Activated CD4-positive, alpha-beta memory T cell treated with anti-CD3 and anti-CD28 coated beads, Interleukin-2, amount 10 ng/mL, durations not matched to agents 7 days and 5 days (primary cell): ENCODE measurements at regions of chr9 and their contacts with region 1.

Region 1: DNA sequence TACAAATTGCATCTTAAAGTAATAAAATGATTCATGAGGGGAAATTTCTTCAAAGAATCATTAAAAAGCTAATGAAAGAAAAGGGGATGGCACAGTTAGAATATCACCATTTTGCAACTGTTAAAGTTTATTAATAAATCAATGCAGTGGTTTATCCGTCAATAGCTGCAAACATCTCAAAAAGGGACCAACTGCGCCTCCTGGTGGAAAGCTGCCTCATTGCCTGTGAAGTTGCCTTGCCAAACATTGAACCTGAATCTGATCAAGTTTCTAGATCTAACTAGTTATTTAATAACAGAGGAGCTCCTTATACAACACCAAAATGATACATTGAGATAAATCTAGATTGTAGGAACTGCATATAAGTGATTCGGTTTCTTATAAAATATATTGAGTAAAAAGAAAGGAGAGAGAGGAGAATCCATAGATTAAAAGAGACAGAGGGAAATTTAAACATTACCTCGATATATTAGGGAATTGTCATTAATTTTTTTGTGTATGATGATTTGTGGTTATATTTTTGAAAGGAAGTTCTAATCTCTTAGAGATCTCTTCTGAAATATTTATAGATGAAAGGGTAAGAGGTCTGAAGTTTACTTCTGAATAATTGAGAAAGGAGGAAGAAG is 6.9 kb upstream of the NDUFB6 start:
- DNase-seq: peak; percentile 80
- H3K4me3 Mint-ChIP-seq: no peak overlapping the region
- H3K27ac Mint-ChIP-seq: no peak overlapping the region
- H3K4me1 Mint-ChIP-seq: peaks cover 5% of the 10 kb centered on the region
- H3K27me3 Mint-ChIP-seq: peaks cover 17% of the 10 kb centered on the region

Region 2: DNA sequence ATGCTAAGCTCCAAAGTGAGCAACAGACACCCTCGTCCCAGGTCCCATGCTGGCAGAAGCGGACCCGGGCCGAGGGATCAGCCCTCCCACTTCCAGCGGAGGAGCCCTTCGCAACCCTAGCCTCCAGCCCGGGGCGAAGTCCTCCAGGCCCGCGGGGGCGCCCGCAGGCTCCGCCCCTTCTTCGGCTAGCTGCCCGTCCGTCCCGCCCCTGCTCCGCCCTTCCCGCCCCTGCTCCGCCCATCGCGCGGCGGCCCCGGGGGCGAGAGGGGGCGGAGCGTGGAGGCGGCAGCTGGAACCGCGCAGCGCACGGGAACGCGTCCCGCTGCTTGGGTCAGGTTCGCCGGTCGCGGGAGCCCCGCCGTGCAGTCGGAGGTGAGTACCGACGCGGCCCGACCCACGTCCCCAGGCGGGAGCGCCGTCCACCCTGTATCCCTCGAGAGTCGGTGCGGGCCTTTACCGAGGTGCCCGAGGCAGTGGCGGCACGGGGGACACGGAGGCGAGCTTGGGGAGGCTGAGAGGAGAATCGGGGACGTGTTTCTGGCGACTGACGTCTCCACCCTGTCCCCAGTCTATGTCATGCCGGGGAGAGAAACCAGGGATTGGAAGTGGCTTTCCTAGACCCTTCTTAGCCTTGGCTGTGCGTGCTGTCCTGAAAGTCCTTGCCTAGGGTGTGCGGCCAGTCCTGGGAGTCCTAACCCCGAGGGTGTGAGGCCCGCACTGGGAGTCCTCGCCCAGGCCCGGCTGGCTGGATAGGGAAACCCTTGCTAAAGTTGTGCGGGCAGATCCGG is 195.3 kb before region 1 on chr9 and contains the start of gene ACO1:
- CTCF ChIA-PET with region 1: interaction called, 416 read pairs
- POLR2A ChIA-PET with region 1: interaction called, 20 read pairs
- DNase-seq: peak; percentile 87
- H3K4me3 Mint-ChIP-seq: peak within 1 kb of the TSS; percentile 75
- H3K27ac Mint-ChIP-seq: no peak within 1 kb of the TSS
- H3K4me1 Mint-ChIP-seq: peaks cover 8% of the 10 kb centered on the region
- H3K27me3 Mint-ChIP-seq: peaks cover 35% of the 10 kb centered on the region
- total RNA-seq, gene ACO1: 6.4 to 6.6 TPM

Region 3: DNA sequence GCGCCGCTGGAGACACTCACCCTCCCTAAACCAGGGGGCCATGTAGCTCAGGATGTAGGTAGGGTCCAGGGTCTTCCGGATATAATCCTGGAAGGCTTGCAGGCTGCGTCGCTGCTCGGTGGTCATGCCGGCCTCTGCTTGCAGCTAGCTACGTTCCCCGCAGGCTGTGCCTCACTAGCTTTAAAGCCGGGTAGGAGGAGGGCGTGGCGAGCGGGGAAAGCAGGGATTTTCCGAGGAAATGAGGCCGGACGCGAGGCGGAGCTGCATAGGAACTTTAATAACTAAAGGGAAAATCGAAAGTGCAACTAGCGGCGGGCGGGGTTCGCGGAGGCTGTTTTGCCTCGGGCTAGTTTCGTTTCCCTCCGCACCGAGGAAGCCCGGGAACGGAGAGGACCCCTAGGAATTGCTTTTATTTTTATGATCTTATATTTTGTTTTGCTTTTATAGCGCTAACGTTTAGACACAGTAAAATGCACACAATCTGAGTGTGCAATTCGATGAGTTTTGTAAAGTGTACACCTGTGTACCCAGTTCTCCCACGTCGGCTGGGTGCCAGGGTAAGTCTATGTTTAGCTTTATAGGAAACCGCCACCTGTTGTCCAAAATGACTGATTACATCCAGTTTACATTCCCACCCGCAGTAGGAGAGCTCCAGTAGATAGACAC is 53.6 kb before region 1 on chr9 and contains the start of gene RIGI:
- CTCF ChIA-PET with region 1: interaction called, 14 read pairs
- POLR2A ChIA-PET with region 1: interaction called, 5 read pairs
- DNase-seq: peak; percentile 83
- H3K4me3 Mint-ChIP-seq: peak within 1 kb of the TSS; percentile 96
- H3K27ac Mint-ChIP-seq: peak within 1 kb of the TSS; percentile 88
- H3K4me1 Mint-ChIP-seq: peaks cover 60% of the 10 kb centered on the region
- H3K27me3 Mint-ChIP-seq: no peaks in the 10 kb centered on the region
- total RNA-seq, gene RIGI: 32.4 to 33.7 TPM

Region 4: GRCh38 chr9:32550562-32551433 is 29.0 kb before region 1 on chr9:
- CTCF ChIA-PET with region 1: interaction called, 56 read pairs
- POLR2A ChIA-PET with region 1: interaction called, 4 read pairs
- DNase-seq: peak; percentile 94
- H3K4me3 Mint-ChIP-seq: peak overlapping the region; percentile 91
- H3K27ac Mint-ChIP-seq: peak overlapping the region; percentile 100
- H3K4me1 Mint-ChIP-seq: peaks cover 44% of the 10 kb centered on the region
- H3K27me3 Mint-ChIP-seq: no peaks in the 10 kb centered on the region

Region 5: DNA sequence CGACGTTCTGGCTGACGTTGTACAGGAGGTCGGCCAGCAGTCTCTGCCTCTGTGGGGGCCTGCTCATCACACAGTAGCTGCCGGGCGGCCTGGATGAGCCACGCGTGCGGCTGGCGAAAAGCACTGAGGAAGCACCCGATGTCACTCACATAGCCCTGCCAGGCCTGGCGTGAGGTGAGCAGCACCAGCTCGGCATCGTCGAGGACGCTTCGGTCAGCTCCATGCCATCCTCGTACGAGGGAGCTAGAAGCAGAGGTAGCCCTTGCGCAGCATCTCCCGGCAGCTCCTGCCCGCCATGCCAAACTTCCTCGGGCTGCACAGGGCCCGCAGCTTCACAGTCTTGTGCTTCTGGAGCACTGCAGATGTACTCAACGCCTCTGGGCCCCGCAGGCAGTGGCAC is 13.0 kb before region 1 on chr9:
- CTCF ChIA-PET with region 1: interaction called, 19 read pairs
- POLR2A ChIA-PET with region 1: no interaction called
- DNase-seq: no peak
- H3K4me3 Mint-ChIP-seq: no peak overlapping the region
- H3K27ac Mint-ChIP-seq: no peak overlapping the region
- H3K4me1 Mint-ChIP-seq: peaks cover 20% of the 10 kb centered on the region
- H3K27me3 Mint-ChIP-seq: no peaks in the 10 kb centered on the region

Region 6: DNA sequence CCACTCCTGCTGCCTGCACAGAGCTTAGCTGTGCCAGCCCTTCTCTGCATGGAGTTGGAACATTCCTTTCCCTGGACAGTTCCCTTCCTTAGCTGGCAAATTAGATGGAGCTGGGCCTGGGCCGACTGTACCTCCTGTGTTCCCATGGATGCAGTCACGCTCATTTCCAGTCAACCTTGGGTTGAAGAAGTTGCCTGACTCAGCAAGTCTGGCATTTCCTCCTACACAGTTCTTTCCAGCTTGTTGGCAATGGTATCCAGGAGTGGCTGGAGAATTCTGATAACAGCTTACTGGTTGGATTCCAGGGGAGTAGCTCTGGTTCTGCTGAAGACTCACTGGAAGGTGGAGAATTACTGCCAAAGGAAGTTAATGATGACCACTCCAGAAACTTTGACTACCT is 64.9 kb after region 1 on chr9:
- CTCF ChIA-PET with region 1: no interaction called
- POLR2A ChIA-PET with region 1: no interaction called
- DNase-seq: no peak
- H3K4me3 Mint-ChIP-seq: no peak overlapping the region
- H3K27ac Mint-ChIP-seq: no peak overlapping the region
- H3K4me1 Mint-ChIP-seq: no peaks in the 10 kb centered on the region
- H3K27me3 Mint-ChIP-seq: peaks cover 6% of the 10 kb centered on the region

Region 7: GRCh38 chr9:32968101-32969011 is 388.5 kb after region 1 on chr9:
- CTCF ChIA-PET with region 1: interaction called, 45 read pairs
- POLR2A ChIA-PET with region 1: no interaction called
- DNase-seq: peak; percentile 61
- H3K4me3 Mint-ChIP-seq: no peak overlapping the region
- H3K27ac Mint-ChIP-seq: no peak overlapping the region
- H3K4me1 Mint-ChIP-seq: peaks cover 2% of the 10 kb centered on the region
- H3K27me3 Mint-ChIP-seq: no peaks in the 10 kb centered on the region